ENCODE measurements at regions of chr19 and their contacts with region 1.

Region 1: GRCh38 chr19:47296036-47296435 is 13.6 kb upstream of the C5AR1 start:
- DNase-seq: peak; percentile 59 to 79 (median 66)
- H3K4me3 ChIP-seq: no peak overlapping the region
- H3K27ac ChIP-seq: no peak overlapping the region
- H3K4me1 ChIP-seq: no peaks in the 10 kb centered on the region
- H3K27me3 ChIP-seq: no peaks in the 10 kb centered on the region
- CTCF ChIP-seq: peak; percentile 47 to 57 (median 51)
- EP300 ChIP-seq: no peak
- POLR2A ChIP-seq: no peak

Region 2: GRCh38 chr19:47063874-47064273 is 232.2 kb before region 1 on chr19:
- intact Hi-C with region 1: no loop called
- DNase-seq: no peak
- H3K4me3 ChIP-seq: no peak overlapping the region
- H3K27ac ChIP-seq: no peak overlapping the region
- H3K4me1 ChIP-seq: no peaks in the 10 kb centered on the region
- H3K27me3 ChIP-seq: no peaks in the 10 kb centered on the region
- CTCF ChIP-seq: no peak
- EP300 ChIP-seq: no peak
- POLR2A ChIP-seq: no peak

Region 3: DNA sequence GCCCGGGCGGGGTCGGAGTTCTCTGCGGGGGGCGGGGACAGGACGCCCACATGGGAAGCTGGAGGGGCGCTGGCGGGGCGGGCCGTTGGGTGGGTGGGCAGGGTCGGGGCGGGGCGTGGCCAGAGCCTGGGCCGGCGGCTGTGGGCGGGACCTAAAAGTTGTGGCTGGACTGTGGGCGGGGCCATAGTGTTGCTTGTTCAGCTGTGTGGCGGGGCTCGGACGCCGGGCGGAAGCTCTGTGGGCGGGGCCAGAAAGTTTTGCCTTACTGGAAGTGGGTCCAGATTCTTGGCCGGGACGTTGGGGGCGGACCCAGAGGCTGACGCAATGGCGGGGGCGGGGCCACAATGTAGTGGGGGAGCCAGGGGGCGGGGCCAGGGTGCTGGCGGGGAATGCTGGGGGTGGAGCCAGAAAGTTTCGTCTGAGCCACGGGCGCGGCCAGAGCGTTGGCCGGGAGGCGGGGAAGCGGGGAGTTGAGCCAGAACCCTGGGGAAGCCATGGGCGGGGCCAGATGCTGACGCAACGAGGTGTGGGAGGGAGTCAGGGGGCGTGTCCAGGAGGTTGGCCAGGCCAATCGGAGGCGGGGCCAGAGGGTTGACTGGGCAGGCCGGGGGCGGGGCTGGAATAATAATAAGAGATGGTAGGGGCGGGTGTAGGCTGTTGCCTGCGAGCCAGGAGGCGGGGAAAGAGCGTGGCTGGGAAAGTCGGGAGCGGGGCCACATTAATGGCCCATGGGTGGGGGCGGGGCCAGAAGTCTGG is 39.2 kb before region 1 on chr19:
- intact Hi-C with region 1: no loop called
- DNase-seq: peak; percentile 100
- H3K4me3 ChIP-seq: peak overlapping the region; percentile 65
- H3K27ac ChIP-seq: peak overlapping the region; percentile 80 to 95
- H3K4me1 ChIP-seq: peaks cover 7% of the 10 kb centered on the region
- H3K27me3 ChIP-seq: no peaks in the 10 kb centered on the region
- CTCF ChIP-seq: no peak
- EP300 ChIP-seq: peak; percentile 56
- POLR2A ChIP-seq: no peak

Region 4: DNA sequence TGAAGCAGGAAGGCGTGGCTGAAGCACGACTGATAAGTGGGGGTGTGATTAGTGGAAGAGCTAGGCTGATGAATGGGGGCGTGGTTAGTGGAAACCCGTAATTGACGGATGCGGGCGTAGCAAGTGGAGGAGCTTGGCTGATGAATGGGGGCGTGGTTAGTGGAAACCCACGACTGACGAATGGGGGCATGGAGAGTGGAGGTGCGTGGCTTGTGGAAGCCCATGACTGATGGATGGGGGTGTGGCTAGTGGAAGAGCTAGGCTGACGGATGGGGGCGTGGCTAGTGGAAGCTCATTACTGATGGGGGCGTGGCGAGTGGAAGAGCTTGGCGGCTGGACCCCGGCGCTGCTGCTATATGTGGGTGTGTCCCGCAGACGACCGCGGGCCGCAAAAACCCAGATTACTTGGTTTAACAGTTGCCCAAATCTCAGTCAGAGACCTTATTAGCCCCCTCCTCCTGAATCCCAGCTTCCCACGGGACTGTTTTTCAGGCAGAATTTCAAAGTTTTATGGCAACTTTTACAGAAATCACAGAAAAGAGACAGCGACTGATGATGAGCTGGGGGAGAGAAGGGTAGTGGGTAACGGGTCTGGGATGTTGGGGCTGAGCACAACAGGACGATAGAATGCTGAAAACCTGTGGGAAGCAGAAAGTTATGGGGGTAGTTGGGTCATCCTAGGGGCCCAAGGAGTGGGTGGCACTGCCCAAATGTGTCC is 132.3 kb after region 1 on chr19:
- intact Hi-C with region 1: loop called in 2 of 4 experiments (anchors 10 kb)
- DNase-seq: peak; percentile 72 to 93 (median 86)
- H3K4me3 ChIP-seq: no peak overlapping the region
- H3K27ac ChIP-seq: no peak overlapping the region
- H3K4me1 ChIP-seq: peaks cover 10% of the 10 kb centered on the region
- H3K27me3 ChIP-seq: no peaks in the 10 kb centered on the region
- CTCF ChIP-seq: no peak
- EP300 ChIP-seq: no peak
- POLR2A ChIP-seq: no peak

Region 5: DNA sequence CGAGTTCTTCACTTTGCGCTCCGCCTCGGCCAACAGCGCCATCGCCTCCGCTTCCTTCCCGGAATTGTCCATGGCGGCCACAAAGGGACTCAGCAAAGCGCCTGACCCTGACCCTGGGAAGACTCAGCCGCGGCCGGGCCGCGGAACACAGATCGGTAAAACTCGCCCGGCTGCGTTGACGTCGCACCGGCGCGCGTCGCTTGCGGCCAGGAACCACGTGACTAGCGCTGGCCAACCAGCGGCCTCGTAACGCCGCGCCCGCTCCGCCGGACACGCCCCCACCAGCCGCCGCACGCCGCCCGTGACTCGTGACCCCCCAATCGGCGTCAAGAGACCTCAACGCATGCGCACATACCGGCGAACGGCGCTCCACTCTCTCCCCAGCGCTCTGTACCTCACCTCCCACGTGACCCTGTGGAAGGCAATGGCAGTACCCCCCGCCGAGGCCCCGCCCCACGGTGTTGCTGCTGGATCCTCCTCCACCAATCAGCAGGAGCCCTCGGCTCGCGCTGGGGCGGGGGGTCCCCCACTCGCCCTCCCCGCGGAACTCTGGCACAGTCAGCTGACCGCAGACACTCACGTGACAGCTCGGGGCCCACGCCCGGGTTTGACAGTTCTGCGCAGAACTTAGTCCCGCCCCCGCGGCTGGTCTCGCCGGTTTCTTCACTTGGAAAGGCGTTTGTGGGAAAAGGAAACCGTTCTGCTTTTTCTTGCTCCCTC is 219.0 kb after region 1 on chr19 and contains the start of gene NAPA:
- intact Hi-C with region 1: no loop called
- DNase-seq: peak; percentile 100
- H3K4me3 ChIP-seq: peak within 1 kb of the TSS; percentile 78
- H3K27ac ChIP-seq: peak within 1 kb of the TSS; percentile 85 to 97
- H3K4me1 ChIP-seq: peaks cover 34% of the 10 kb centered on the region
- H3K27me3 ChIP-seq: no peaks in the 10 kb centered on the region
- CTCF ChIP-seq: peak in 2 of 3 donors; percentile 23 to 98
- EP300 ChIP-seq: peak; percentile 92
- POLR2A ChIP-seq: peak; percentile 95
- total RNA-seq, gene NAPA: 76.5 to 101 (median 95.1) TPM

Region 6: GRCh38 chr19:47707135-47707925 is 411.3 kb after region 1 on chr19:
- intact Hi-C with region 1: loop called in 1 of 4 experiments (anchors 5 kb)
- DNase-seq: peak in 4 of 5 donors; percentile 57 to 77 (median 74)
- H3K4me3 ChIP-seq: no peak overlapping the region
- H3K27ac ChIP-seq: no peak overlapping the region
- H3K4me1 ChIP-seq: peaks cover 3% of the 10 kb centered on the region
- H3K27me3 ChIP-seq: no peaks in the 10 kb centered on the region
- CTCF ChIP-seq: peak; percentile 11 to 79 (median 65)
- EP300 ChIP-seq: no peak
- POLR2A ChIP-seq: no peak

Measured in ovary (tissue), 10 donors.